Left ventricle myocardium inferior (tissue), 1 donor: ENCODE measurements at regions of chr2 and their contacts with region 1.

Region 1: GRCh38 chr2:21118302-21118920 is 5.4 kb upstream of the TDRD15 start:
- DNase-seq: no peak
- H3K4me3 ChIP-seq: no peak overlapping the region
- H3K27ac ChIP-seq: no peak overlapping the region
- H3K4me1 ChIP-seq: no peaks in the 10 kb centered on the region
- H3K27me3 ChIP-seq: peaks cover 19% of the 10 kb centered on the region
- CTCF ChIP-seq: peak; percentile 68

Region 2: DNA sequence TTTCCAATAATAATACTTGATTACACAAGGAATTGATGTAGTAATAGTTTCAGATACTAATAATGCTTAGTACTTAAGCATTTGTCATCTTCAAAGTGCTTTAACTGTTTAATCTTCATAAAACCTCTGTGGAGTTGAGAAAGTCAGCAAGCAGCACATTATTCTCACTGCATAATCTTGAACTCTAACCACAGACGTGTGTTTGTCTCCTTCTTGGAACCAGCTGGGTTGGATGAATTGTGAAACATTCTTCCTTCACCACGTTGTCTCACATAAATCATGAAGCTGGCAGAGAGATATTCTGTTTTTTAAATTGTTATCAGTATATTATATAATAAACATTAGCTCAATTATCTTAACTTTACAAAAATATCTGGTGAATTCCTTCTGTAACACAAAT is 240.5 kb before region 1 on chr2:
- intact Hi-C with region 1: no loop called
- DNase-seq: no peak
- H3K4me3 ChIP-seq: no peak overlapping the region
- H3K27ac ChIP-seq: no peak overlapping the region
- H3K4me1 ChIP-seq: no peaks in the 10 kb centered on the region
- H3K27me3 ChIP-seq: peaks cover 12% of the 10 kb centered on the region
- CTCF ChIP-seq: no peak

Region 3: DNA sequence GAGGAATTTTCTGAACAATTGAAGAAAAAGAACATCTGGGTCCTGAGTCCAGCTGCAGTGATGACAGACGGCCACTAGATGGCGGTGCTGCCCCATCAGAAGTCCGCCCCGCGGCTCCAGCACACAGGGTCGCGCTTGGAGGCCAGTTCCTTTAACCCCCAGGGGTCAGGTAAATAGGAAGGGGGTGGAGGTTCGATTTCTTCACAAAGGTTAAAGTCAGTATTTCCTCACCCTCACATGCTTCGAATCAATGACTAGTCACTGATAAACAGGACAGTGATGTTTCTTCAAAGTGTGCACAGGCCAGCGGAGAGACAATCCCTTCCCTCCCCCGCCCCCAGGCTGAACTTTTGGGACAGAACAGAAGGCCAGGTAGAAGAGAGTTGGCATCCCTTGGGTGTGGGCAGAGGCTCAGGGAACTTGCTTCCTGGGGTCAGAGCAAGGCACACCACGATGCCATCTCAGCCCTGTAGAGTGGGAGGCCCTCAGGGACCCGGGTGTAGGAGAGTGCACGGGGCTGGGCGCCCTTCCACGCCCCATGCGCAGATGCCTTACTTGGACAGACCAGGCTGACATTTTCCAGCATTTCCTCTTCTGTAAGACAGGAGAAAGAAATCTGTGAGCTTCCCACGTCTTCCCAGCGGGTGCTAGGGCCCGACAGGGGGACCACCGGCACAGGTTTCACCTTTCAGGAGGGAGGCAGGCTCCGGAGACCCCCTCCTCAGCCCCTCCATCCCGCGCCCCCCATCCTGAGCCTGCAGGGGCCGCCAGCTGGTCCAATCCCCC is 75.3 kb before region 1 on chr2:
- intact Hi-C with region 1: loop called (anchors 2 kb)
- DNase-seq: peak; percentile 71
- H3K4me3 ChIP-seq: peak overlapping the region; percentile 56
- H3K27ac ChIP-seq: peak overlapping the region; percentile 74
- H3K4me1 ChIP-seq: peaks cover 31% of the 10 kb centered on the region
- H3K27me3 ChIP-seq: peaks cover 29% of the 10 kb centered on the region
- CTCF ChIP-seq: peak; percentile 99

Region 4: DNA sequence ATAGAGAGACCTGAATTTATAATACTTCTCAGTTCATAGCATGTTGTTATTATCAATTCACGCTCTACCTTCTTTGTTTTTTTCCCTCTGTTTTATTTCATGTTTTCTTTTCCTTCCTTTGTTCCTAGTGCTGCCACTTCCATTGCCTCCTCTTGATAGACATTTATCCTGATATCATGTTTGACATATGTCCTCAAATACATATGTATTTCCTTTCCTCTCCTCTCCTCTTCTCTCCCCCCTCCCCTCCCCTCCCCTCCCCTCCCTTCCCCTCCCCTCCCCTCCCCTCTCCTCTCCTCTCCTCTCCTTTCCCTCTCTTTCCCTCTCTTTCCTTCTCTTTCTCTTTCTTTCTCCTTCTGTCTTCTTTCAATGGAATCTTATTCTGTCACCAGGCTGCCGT is 73.1 kb after region 1 on chr2:
- intact Hi-C with region 1: no loop called
- DNase-seq: no peak
- H3K4me3 ChIP-seq: no peak overlapping the region
- H3K27ac ChIP-seq: no peak overlapping the region
- H3K4me1 ChIP-seq: no peaks in the 10 kb centered on the region
- H3K27me3 ChIP-seq: no peaks in the 10 kb centered on the region
- CTCF ChIP-seq: no peak